SK-N-SH (cell line): ENCODE measurements at regions of chr3 and their contacts with region 1.

Region 1: DNA sequence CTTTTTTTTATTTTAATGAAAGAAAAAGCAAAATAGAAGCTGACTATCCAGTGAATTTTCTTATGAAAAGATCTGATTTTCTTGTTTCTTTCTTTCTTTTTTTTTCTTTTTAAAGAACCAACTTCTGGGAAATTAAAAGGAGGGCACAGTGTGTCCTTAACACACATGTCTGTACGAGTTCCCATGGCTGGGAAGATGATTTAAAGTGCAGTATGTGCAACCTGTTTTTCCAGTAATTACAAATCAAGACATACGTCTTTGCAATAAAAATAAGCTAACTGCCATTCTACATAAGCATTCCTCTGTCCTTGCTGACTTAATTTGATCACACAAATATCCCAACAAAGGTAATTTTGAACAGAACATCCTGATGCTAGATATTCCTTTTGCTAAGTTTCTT is 416.1 kb downstream of the ROBO1 start:
- DNase-seq: no peak
- H3K4me3 ChIP-seq: no peak overlapping the region
- H3K27ac ChIP-seq: no peak overlapping the region
- H3K4me1 ChIP-seq: no peaks in the 10 kb centered on the region
- H3K27me3 ChIP-seq: no peaks in the 10 kb centered on the region
- CTCF ChIP-seq: no peak
- EP300 ChIP-seq: no peak
- RAD21 ChIP-seq: no peak

Region 2: DNA sequence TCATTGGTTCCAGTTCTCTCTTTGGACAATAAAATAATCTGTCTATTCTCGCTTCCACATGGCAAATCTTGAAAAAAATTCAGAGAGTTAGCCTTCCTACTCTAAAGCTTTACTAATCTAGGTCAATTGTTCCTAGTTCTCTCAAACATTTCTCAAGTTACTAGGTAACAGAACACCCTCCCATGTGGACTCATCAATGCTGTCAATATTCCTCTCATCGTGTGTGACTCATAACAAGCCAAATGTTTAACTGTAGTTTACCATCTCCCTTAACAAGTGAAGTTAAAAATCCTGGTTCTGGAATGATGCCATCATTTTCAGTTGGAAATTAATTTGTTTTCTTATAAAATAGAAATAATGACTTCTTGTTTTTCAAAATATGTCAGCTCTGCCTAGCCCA is 22.5 kb before region 1 on chr3:
- CTCF ChIA-PET with region 1: no interaction called
- POLR2A ChIA-PET with region 1: no interaction called
- DNase-seq: no peak
- H3K4me3 ChIP-seq: no peak overlapping the region
- H3K27ac ChIP-seq: no peak overlapping the region
- H3K4me1 ChIP-seq: no peaks in the 10 kb centered on the region
- H3K27me3 ChIP-seq: no peaks in the 10 kb centered on the region
- CTCF ChIP-seq: no peak
- EP300 ChIP-seq: no peak
- RAD21 ChIP-seq: no peak

Region 3: GRCh38 chr3:79361748-79362378 is 10.2 kb after region 1 on chr3:
- CTCF ChIA-PET with region 1: interaction called, 21 read pairs
- POLR2A ChIA-PET with region 1: no interaction called
- DNase-seq: peak; percentile 36
- H3K4me3 ChIP-seq: 0 out of 4 replicates have a peak overlapping the region, but pooled peaks of 1 of the 2 experiments have one; percentile 20
- H3K27ac ChIP-seq: no peak overlapping the region
- H3K4me1 ChIP-seq: peaks cover 0 to 5% of the 10 kb centered on the region in 2 experiments; a peak in 2 of 4 replicates
- H3K27me3 ChIP-seq: no peaks in the 10 kb centered on the region
- CTCF ChIP-seq: peak; percentile 78
- EP300 ChIP-seq: no peak
- RAD21 ChIP-seq: peak; percentile 79